ENCODE measurements at regions of chr9 and their contacts with region 1.

Region 1: GRCh38 chr9:19184144-19184917 is 46.2 kb upstream of the DENND4C start:
- DNase-seq: peak; percentile 72 to 78
- ATAC-seq: peak; percentile 75 to 95 (median 92)
- H3K4me3 ChIP-seq: no peak overlapping the region
- H3K27ac ChIP-seq: peak overlapping the region; percentile 69
- H3K4me1 ChIP-seq: peaks cover 7% of the 10 kb centered on the region
- H3K27me3 ChIP-seq: no peaks in the 10 kb centered on the region
- CTCF ChIP-seq: no peak

Region 2: DNA sequence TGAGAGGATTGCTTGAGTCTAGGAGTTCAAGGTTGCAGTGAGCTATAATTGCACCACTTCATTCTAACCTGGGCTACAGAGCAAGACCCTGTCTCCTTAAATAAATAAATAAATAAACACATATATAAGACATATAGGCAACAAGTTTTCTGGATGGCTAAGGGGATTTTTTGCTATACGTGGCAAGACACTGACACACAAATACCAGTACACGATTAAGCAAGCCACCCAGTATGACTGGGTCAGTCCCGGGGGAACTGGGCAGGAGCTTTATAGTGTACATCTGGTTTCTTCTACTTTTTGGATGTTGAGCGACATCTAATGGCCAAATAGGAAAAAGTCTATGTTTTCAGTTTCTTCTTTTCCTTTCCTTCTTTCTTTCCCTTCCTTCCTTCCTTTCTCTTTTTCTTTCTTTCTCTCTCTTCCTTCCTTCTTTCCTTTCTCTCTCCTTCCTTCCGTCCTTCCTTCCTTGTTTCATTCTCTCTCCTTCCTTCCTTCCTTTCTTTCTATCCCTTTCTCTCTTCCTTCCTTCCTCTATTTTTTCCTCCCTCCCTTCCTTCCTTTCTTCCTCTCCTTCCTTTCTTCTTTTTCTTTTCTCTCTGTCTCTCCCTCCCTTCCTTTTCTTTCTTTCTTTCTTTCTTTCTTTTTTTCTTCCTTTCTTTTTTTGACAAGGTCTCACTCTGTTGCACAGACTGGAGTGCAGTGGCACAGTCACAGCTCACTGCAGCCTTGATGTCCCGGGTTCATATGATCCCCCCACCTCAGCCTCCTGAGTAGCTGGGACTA is 10.0 kb before region 1 on chr9:
- intact Hi-C with region 1: no loop called
- DNase-seq: peak; percentile 83 to 89
- ATAC-seq: peak; percentile 93 to 99 (median 96)
- H3K4me3 ChIP-seq: no peak overlapping the region
- H3K27ac ChIP-seq: no peak overlapping the region
- H3K4me1 ChIP-seq: no peaks in the 10 kb centered on the region
- H3K27me3 ChIP-seq: no peaks in the 10 kb centered on the region
- CTCF ChIP-seq: peak; percentile 73

Region 3: GRCh38 chr9:19223724-19224123 is 39.4 kb after region 1 on chr9:
- intact Hi-C with region 1: loop called in 1 of 2 experiments (anchors 5 kb)
- DNase-seq: no peak
- ATAC-seq: no peak
- H3K4me3 ChIP-seq: no peak overlapping the region
- H3K27ac ChIP-seq: no peak overlapping the region
- H3K4me1 ChIP-seq: no peaks in the 10 kb centered on the region
- H3K27me3 ChIP-seq: no peaks in the 10 kb centered on the region
- CTCF ChIP-seq: no peak

Measured in psoas muscle (tissue), 8 donors.